Activated naive CD4-positive, alpha-beta T cell treated with anti-CD3 and anti-CD28 coated beads for 36 hours (primary cell): ENCODE measurements at regions of chr1 and their contacts with region 1.

Region 1: GRCh38 chr1:68120136-68120791 is 69.8 kb upstream of the DIRAS3 start:
- DNase-seq: peak; percentile 51
- H3K4me3 Mint-ChIP-seq: no peak overlapping the region
- H3K27ac Mint-ChIP-seq: no peak overlapping the region
- H3K4me1 Mint-ChIP-seq: peaks cover 4% of the 10 kb centered on the region
- H3K27me3 Mint-ChIP-seq: peaks cover 6% of the 10 kb centered on the region

Region 2: GRCh38 chr1:67561704-67562113 is 558.6 kb before region 1 on chr1:
- CTCF ChIA-PET with region 1: interaction called, 5 read pairs
- intact Hi-C with region 1: loop called (anchors 10 kb)
- DNase-seq: peak; percentile 96
- H3K4me3 Mint-ChIP-seq: no peak overlapping the region
- H3K27ac Mint-ChIP-seq: no peak overlapping the region
- H3K4me1 Mint-ChIP-seq: no peaks in the 10 kb centered on the region
- H3K27me3 Mint-ChIP-seq: no peaks in the 10 kb centered on the region

Region 3: GRCh38 chr1:68346188-68346808 is 226.0 kb after region 1 on chr1:
- CTCF ChIA-PET with region 1: interaction called, 13 read pairs
- intact Hi-C with region 1: loop called (anchors 1 kb)
- DNase-seq: no peak
- H3K4me3 Mint-ChIP-seq: no peak overlapping the region
- H3K27ac Mint-ChIP-seq: no peak overlapping the region
- H3K4me1 Mint-ChIP-seq: no peaks in the 10 kb centered on the region
- H3K27me3 Mint-ChIP-seq: no peaks in the 10 kb centered on the region

Region 4: GRCh38 chr1:68442822-68443556 is 322.7 kb after region 1 on chr1:
- CTCF ChIA-PET with region 1: interaction called, 10 read pairs
- intact Hi-C with region 1: loop called (anchors 1 kb)
- DNase-seq: peak; percentile 23
- H3K4me3 Mint-ChIP-seq: no peak overlapping the region
- H3K27ac Mint-ChIP-seq: no peak overlapping the region
- H3K4me1 Mint-ChIP-seq: no peaks in the 10 kb centered on the region
- H3K27me3 Mint-ChIP-seq: peaks cover 2% of the 10 kb centered on the region

Region 5: GRCh38 chr1:69737527-69738185 is 1617.4 kb after region 1 on chr1:
- CTCF ChIA-PET with region 1: interaction called, 12 read pairs
- intact Hi-C with region 1: no loop called
- DNase-seq: peak; percentile 12
- H3K4me3 Mint-ChIP-seq: no peak overlapping the region
- H3K27ac Mint-ChIP-seq: no peak overlapping the region
- H3K4me1 Mint-ChIP-seq: no peaks in the 10 kb centered on the region
- H3K27me3 Mint-ChIP-seq: peaks cover 3% of the 10 kb centered on the region